Left cardiac atrium (tissue), 4 donors: ENCODE measurements at regions of chr2 and their contacts with region 1.

Region 1: GRCh38 chr2:235746257-235747084 is 252.6 kb downstream of the AGAP1 start:
- DNase-seq: peak; percentile 55
- ATAC-seq: peak; percentile 86 to 92

Region 2: GRCh38 chr2:235135990-235136561 is 610.4 kb before region 1 on chr2:
- intact Hi-C with region 1: loop called (anchors 2 to 10 kb)
- DNase-seq: peak; percentile 90
- ATAC-seq: peak; percentile 94 to 96

Region 3: DNA sequence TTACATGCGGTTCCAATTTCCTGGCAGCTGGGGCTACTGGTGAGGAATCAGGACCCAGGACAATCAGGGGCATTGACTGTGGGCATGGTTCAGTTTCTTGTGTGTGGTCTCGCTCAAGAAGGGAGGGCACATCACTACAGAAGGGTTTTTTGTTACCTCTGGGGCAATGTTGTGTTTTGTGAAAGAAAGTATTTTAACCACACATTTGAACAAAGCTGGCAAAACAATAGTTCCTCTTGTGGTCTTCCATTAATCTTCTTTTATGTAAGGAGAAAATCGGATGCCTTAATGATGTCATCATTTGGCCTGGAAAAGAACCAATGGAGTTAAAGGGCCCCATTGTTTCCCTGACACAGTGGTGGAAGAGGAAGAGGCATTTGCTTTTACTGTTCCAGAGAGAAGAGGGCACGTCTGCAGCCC is 597.2 kb before region 1 on chr2:
- intact Hi-C with region 1: loop called in 1 of 2 experiments (anchors 10 kb)
- DNase-seq: no peak
- ATAC-seq: no peak

Region 4: GRCh38 chr2:235595422-235596010 is 151.0 kb before region 1 on chr2:
- intact Hi-C with region 1: loop called (anchors 2 kb)
- DNase-seq: peak; percentile 68
- ATAC-seq: peak; percentile 56 to 70

Region 5: DNA sequence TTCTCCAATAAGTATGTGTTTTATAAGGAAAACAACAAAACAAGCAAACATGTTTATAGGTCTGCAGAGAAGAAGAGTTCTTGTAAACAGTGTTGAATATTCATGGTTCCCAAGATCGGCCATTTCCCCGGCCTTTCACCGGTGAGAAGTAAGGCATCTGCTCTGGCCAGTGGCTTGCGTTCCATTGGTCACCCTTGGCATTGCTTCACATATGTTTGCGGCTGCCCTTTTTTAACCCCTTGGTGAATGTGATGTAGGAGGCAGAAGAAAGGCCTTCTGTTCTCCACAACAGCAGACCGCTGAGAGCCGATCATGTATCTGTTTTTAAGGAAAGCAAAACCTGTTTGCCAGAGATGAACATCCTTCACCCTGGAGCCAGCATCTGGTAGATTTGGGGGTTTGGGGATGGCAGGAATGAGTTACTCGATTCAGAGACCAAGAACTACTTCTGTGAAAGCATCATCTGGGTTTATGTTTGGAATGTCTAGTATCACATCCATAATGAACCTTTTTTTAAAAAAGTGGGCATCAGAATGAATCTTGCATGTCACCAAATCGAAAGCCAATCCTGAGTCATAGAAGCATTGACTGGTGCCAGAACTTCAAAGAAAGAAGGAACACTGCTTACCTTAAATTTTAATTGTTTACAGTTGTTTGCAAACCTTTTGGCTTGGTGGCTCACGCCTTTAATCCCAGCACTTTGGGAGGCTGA is 140.3 kb before region 1 on chr2:
- intact Hi-C with region 1: no loop called
- DNase-seq: no peak
- ATAC-seq: no peak

Region 6: DNA sequence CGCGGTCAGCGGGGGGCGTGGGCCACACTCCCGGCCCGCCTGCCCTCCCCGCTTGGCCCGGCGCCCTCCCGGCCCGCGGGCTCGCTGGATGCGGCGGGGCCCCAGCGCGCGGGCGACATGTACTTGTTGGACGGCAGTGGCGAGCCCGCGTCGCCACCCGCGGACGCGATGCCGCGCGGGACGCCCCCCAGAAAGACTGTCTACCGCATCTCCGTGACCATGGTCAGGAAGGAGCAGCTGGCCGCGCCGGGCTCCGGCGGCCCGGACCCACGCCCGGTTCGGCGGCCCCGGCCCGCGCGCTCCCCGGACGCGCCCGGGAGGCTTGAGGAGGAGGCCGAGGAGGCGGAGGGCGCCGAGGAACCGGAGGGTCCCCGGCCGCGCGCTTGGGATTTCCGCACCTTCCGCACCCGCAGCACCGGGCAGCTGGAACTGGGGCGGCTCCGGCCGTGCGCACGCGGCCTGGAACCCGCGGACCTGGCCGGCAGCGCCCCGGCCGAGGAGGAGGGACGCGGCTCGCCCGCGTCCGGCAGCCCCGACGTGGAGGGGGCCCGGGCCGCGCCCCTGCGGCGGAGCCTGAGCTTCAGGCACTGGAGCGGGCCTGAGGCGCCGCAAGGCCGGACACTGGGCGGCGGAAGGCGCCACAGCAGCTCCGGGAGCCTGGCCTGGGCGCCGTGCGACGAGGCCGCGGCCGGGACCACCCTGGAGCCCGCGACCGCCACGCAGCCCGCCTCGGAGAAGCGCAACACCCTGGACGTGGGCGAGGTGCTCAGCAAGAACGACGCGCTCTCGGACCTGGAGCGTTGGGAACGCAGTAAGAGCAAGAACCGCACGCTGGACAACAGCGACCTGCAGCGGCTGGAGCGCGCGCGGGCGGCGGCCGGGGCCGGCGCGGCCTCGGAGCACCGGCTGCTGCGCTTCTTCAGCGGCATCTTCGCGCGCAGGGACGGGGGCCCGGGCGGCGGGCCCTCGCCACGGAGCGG is 76.2 kb before region 1 on chr2:
- intact Hi-C with region 1: loop called in 1 of 2 experiments (anchors 10 kb)
- DNase-seq: peak; percentile 74
- ATAC-seq: peak; percentile 69 to 78

Region 7: GRCh38 chr2:235698028-235698427 is 48.4 kb before region 1 on chr2:
- intact Hi-C with region 1: no loop called
- DNase-seq: no peak
- ATAC-seq: no peak

Region 8: DNA sequence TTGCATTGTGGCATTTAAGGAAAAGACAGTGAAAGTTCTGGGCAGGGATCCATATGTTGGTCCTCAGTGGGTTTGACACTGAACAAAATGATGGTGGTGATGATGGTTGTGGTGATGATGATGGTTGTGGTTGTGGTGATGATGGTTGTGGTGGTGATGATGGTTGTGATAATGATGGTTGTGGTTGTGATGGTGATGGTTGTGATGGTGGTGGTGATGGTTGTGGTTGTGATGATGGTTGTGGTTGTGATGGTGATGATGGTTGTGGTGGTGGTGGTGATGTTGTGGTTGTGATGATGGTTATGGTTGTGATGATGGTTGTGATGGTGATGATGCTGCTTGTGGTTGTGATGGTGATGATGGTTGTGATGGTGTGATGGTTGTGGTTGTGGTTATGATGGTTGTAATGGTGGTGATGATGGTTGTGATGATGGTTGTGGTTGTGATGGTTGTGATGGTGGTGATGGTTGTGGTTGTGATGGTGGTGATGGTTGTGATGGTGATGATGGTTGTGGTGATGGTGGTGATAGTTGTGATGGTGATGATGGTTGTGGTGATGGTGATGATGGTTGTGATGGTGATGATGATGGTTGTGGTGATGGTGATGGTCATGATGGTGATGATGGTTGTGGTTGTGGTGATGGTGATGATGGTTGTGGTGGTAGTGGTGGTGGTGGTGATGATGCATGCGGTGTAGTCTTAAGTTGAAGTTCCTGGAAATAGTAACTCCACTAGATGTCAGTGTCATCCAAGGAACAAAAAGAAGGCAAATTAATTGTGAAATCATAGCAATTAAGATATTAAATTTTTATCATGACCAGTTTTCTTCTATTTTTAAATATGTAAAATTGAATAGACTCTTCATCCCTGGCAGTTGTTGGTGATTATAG is 56.3 kb after region 1 on chr2:
- intact Hi-C with region 1: no loop called
- DNase-seq: no peak
- ATAC-seq: no peak

Region 9: GRCh38 chr2:236988690-236989624 is 1242.5 kb after region 1 on chr2:
- intact Hi-C with region 1: no loop called
- DNase-seq: peak; percentile 54
- ATAC-seq: peak; percentile 67 to 78